Common myeloid progenitor, CD34-positive (primary cell): ENCODE measurements at regions of chr11 and their contacts with region 1.

Region 1: GRCh38 chr11:104148074-104148473 is 15.9 kb downstream of the PDGFD start:
- DNase-seq: no peak
- H3K4me3 ChIP-seq: no peak overlapping the region
- H3K27ac ChIP-seq: no peak overlapping the region
- H3K4me1 ChIP-seq: peaks cover 3 to 9% (median 8%) of the 10 kb centered on the region in 4 experiments
- H3K27me3 ChIP-seq: no peaks in the 10 kb centered on the region

Region 2: DNA sequence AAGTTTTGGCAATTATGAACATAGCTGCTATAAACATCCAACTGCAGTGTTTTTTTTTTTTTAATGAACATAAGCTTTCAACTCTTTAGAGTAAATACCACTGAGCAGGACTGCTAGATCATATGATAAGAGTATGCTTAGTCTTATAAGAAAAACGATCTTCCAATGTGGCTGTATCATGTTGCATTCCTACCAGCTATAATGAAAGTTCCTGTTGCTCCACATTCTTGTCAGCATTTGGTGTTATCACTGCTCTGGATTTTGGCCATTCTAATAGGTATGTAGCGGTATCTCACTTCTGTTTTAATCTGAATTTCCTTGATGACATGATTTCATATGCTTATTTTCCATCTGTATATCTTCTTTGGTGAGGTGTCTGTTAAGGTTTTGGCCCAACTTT is 34.5 kb before region 1 on chr11:
- CTCF ChIA-PET with region 1: no interaction called
- POLR2A ChIA-PET with region 1: no interaction called
- DNase-seq: no peak
- H3K4me3 ChIP-seq: no peak overlapping the region
- H3K27ac ChIP-seq: no peak overlapping the region
- H3K4me1 ChIP-seq: no peaks in the 10 kb centered on the region
- H3K27me3 ChIP-seq: no peaks in the 10 kb centered on the region

Region 3: DNA sequence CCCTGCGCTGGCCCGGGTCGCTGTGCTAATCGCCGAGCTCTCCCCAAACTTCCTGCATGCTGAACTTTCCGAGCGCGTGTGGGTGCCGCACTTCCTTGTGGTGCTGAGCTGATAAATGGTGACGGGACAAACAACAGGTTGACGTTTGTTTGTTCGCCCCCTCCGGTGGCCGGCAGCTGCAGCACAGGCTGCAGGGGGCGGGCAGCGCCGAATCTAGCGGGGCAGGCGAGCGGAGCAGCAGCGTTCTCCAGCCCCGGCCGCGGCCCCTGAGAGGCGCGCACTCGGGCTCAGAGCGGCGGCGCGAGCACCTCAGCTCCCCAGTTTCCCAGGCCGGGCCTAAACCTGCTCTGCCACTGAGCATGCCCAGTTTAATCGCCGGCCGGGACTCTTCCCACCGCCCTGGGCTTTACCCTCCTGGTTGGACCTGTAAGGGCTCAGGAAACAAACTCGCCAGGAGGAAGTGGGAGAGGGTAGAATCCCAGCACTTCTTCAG is 16.0 kb after region 1 on chr11 and contains the start of gene PDGFD:
- CTCF ChIA-PET with region 1: interaction called, 11 read pairs
- POLR2A ChIA-PET with region 1: no interaction called
- DNase-seq: peak; percentile 93 to 97 (median 94)
- H3K4me3 ChIP-seq: peak within 1 kb of the TSS; percentile 59 to 95 (median 84)
- H3K27ac ChIP-seq: no peak within 1 kb of the TSS
- H3K4me1 ChIP-seq: peaks cover 3 to 19% (median 13%) of the 10 kb centered on the region in 4 experiments
- H3K27me3 ChIP-seq: no peaks in the 10 kb centered on the region